IMR-90 (cell line): ENCODE measurements at regions of chr11 and their contacts with region 1.

Region 1: DNA sequence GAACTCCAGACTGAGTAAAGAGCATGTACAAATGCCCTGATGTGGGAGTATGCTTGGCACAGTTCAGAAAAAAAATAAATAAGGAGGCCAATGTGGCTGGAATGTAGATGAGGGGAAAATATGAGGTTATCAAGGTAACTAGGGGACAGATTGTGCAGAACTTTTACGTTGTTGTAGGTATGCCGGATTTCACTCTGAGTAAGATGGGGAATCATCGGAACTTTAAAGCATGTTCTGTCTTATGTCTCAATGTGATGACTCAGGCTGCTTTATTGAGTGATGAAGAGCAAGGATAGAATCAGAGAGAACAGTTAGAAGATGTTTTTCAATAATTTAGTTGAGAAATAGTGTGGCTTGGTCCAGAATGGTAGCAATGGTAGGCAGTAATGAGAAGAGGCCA is 130.4 kb downstream of the C11orf87 start:
- DNase-seq: no peak
- ATAC-seq: peak; percentile 46
- H3K4me3 ChIP-seq: no peak overlapping the region
- H3K27ac ChIP-seq: no peak overlapping the region
- H3K4me1 ChIP-seq: peaks cover under 1% of the 10 kb centered on the region; the same call in 1 of the 2 replicates
- H3K27me3 ChIP-seq: no peaks in the 10 kb centered on the region
- CTCF ChIP-seq: no peak
- POLR2A ChIP-seq: no peak
- RAD21 ChIP-seq: no peak

Region 2: GRCh38 chr11:108727665-108728064 is 824.7 kb before region 1 on chr11:
- CTCF ChIA-PET with region 1: no interaction called
- POLR2A ChIA-PET with region 1: no interaction called
- dilution Hi-C with region 1: no loop called
- in situ Hi-C with region 1: no loop called
- intact Hi-C with region 1: loop called (anchors 10 kb)
- DNase-seq: no peak
- ATAC-seq: no peak
- H3K4me3 ChIP-seq: no peak overlapping the region
- H3K27ac ChIP-seq: no peak overlapping the region
- H3K4me1 ChIP-seq: peaks cover 1% of the 10 kb centered on the region; the same call in 1 of the 2 replicates
- H3K27me3 ChIP-seq: no peaks in the 10 kb centered on the region
- CTCF ChIP-seq: no peak
- POLR2A ChIP-seq: no peak
- RAD21 ChIP-seq: no peak

Region 3: DNA sequence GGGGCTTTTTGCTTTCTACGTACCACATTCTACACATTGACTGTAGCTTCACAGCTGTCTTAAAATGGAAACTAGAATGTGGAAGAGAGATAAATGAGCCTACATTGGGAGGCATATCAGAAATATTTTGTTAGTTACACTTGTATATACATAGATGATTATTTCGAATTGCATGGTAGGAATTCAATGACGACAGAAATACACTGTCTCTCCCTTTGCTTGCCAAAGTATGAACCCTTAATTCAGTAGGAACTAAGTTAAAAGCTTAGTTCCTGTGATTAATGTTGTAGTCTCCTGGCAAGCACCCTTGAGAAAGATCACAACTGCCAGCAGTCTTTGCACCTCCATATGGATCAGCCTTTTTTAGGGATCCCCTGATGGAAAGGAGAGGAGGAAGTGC is 120.3 kb before region 1 on chr11:
- CTCF ChIA-PET with region 1: no interaction called
- POLR2A ChIA-PET with region 1: no interaction called
- dilution Hi-C with region 1: no loop called
- in situ Hi-C with region 1: no loop called
- intact Hi-C with region 1: loop called (anchors 5 kb)
- DNase-seq: peak; percentile 60
- ATAC-seq: peak; percentile 74
- H3K4me3 ChIP-seq: no peak overlapping the region
- H3K27ac ChIP-seq: peak overlapping the region; percentile 93; the same call in 1 of the 2 replicates
- H3K4me1 ChIP-seq: peaks cover 7% of the 10 kb centered on the region; the same call in 1 of the 2 replicates
- H3K27me3 ChIP-seq: no peaks in the 10 kb centered on the region
- CTCF ChIP-seq: no peak
- POLR2A ChIP-seq: no peak
- RAD21 ChIP-seq: no peak

Region 4: GRCh38 chr11:109783842-109784241 is 231.5 kb after region 1 on chr11:
- CTCF ChIA-PET with region 1: no interaction called
- POLR2A ChIA-PET with region 1: no interaction called
- dilution Hi-C with region 1: no loop called
- in situ Hi-C with region 1: no loop called
- intact Hi-C with region 1: no loop called
- DNase-seq: no peak
- ATAC-seq: no peak
- H3K4me3 ChIP-seq: no peak overlapping the region
- H3K27ac ChIP-seq: no peak overlapping the region
- H3K4me1 ChIP-seq: no peaks in the 10 kb centered on the region
- H3K27me3 ChIP-seq: no peaks in the 10 kb centered on the region; the same call in 1 of the 2 replicates
- CTCF ChIP-seq: no peak
- POLR2A ChIP-seq: no peak
- RAD21 ChIP-seq: no peak